BJ (cell line): ENCODE measurements at regions of chr16 and their contacts with region 1.

Region 1: DNA sequence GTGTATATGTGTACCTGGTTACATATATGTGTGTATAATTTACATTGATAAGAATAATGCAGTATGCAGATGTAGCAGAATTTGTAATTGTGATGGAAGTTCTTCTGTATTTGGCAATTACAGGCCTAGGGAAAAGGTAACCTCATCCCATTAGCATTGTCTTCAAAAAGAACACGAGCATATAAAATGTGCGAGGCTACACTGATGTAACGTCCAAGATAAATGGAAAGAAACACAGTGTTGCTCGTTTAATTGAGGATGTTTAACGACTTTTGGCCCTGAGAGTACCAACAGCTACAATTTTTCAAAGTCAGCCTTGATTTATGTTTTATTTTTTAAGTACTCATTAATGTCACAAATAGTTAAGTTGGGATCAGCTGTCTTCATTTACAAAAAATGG is 703.5 kb upstream of the RBFOX1 start:
- DNase-seq: no peak
- H3K4me3 ChIP-seq: no peak overlapping the region
- H3K27me3 ChIP-seq: no peaks in the 10 kb centered on the region
- CTCF ChIP-seq: no peak

Region 2: DNA sequence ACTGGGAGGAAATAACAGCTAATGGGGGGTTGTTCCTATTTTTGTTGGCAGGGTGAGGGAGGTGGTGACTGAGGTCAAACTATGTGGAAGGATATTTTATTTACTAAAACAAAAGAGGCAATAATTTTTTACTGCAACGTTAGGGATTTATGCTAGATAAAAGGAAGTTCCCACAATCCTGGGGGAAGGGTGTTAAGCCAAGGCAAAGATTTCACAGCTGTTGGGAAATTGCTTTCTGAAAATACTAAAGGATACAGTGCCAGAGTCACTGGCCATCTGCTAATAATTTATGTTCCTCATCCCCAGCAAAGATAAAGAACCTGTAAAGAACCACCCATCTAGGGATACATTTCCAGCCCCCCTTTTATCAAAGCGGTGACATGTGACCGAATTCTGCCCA is 52.5 kb before region 1 on chr16:
- CTCF ChIA-PET with region 1: no interaction called
- POLR2A ChIA-PET with region 1: no interaction called
- DNase-seq: no peak
- H3K4me3 ChIP-seq: no peak overlapping the region
- H3K27me3 ChIP-seq: no peaks in the 10 kb centered on the region
- CTCF ChIP-seq: no peak

Region 3: GRCh38 chr16:6611535-6611934 is 17.6 kb before region 1 on chr16:
- CTCF ChIA-PET with region 1: no interaction called
- POLR2A ChIA-PET with region 1: no interaction called
- DNase-seq: no peak
- H3K4me3 ChIP-seq: no peak overlapping the region
- H3K27me3 ChIP-seq: no peaks in the 10 kb centered on the region
- CTCF ChIP-seq: no peak

Region 4: GRCh38 chr16:6643080-6643686 is 14.1 kb after region 1 on chr16:
- CTCF ChIA-PET with region 1: interaction called, 11 read pairs
- POLR2A ChIA-PET with region 1: no interaction called
- DNase-seq: peak; percentile 4
- H3K4me3 ChIP-seq: no peak overlapping the region
- H3K27me3 ChIP-seq: no peaks in the 10 kb centered on the region
- CTCF ChIP-seq: peak; percentile 75